Activated CD4-positive, alpha-beta T cell treated with anti-CD3 and anti-CD28 coated beads, Interleukin-2, amount 10 ng/mL, durations not matched to agents 24 days and 14 days (primary cell): ENCODE measurements at regions of chr11 and their contacts with region 1.

Region 1: GRCh38 chr11:95231127-95231880 is at the start of gene SESN3:
- DNase-seq: peak; percentile 100
- H3K4me3 Mint-ChIP-seq: no peak within 1 kb of the TSS
- H3K27ac Mint-ChIP-seq: peak within 1 kb of the TSS; percentile 92
- H3K4me1 Mint-ChIP-seq: peaks cover 28% of the 10 kb centered on the region
- H3K27me3 Mint-ChIP-seq: no peaks in the 10 kb centered on the region
- total RNA-seq, gene SESN3: 63.4 and 64.2 TPM in 2 replicates

Region 2: GRCh38 chr11:95084509-95084908 is 146.8 kb before region 1 on chr11:
- intact Hi-C with region 1: loop called (anchors 2 kb)
- DNase-seq: peak; percentile 71
- H3K4me3 Mint-ChIP-seq: peak overlapping the region; percentile 18
- H3K27ac Mint-ChIP-seq: peak overlapping the region; percentile 61
- H3K4me1 Mint-ChIP-seq: peaks cover 52% of the 10 kb centered on the region
- H3K27me3 Mint-ChIP-seq: no peaks in the 10 kb centered on the region

Region 3: GRCh38 chr11:95296621-95297025 is 65.3 kb after region 1 on chr11:
- intact Hi-C with region 1: loop called (anchors 5 kb)
- DNase-seq: no peak
- H3K4me3 Mint-ChIP-seq: no peak overlapping the region
- H3K27ac Mint-ChIP-seq: no peak overlapping the region
- H3K4me1 Mint-ChIP-seq: peaks cover 33% of the 10 kb centered on the region
- H3K27me3 Mint-ChIP-seq: peaks cover 4% of the 10 kb centered on the region

Region 4: DNA sequence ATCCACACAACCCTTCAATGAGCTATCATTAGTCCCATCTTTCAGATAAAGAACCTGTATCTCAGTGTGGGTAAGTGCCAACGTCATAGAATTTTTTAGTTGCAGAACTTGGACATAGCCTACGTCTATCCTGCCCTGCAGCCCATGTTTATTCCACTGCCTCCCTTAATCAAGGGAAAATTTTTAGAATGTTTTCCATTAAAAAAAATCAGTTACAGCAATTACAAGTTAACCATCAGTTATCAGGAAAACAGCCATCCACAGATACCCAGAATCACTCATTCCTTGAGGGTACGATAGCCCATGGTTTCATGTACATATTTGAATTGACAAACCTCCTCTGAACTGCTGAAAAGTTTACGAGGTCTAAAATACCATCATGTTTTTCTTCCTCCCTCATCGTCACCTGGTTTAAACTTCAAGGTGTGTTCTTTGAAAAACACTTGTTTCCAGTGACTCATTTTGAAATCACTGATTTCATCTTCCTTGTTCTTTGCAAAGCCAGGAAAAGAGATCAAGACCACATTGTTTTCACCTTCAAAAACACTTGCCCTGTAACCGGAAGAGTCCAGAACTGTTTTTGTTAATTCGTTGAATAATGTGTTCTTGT is 457.4 kb after region 1 on chr11:
- intact Hi-C with region 1: loop called (anchors 2 kb)
- DNase-seq: peak; percentile 83
- H3K4me3 Mint-ChIP-seq: no peak overlapping the region
- H3K27ac Mint-ChIP-seq: no peak overlapping the region
- H3K4me1 Mint-ChIP-seq: peaks cover 27% of the 10 kb centered on the region
- H3K27me3 Mint-ChIP-seq: no peaks in the 10 kb centered on the region

Region 5: GRCh38 chr11:95705485-95706124 is 474.3 kb after region 1 on chr11:
- intact Hi-C with region 1: loop called (anchors 1 kb)
- DNase-seq: peak; percentile 96
- H3K4me3 Mint-ChIP-seq: no peak overlapping the region
- H3K27ac Mint-ChIP-seq: no peak overlapping the region
- H3K4me1 Mint-ChIP-seq: peaks cover 17% of the 10 kb centered on the region
- H3K27me3 Mint-ChIP-seq: no peaks in the 10 kb centered on the region

Region 6: DNA sequence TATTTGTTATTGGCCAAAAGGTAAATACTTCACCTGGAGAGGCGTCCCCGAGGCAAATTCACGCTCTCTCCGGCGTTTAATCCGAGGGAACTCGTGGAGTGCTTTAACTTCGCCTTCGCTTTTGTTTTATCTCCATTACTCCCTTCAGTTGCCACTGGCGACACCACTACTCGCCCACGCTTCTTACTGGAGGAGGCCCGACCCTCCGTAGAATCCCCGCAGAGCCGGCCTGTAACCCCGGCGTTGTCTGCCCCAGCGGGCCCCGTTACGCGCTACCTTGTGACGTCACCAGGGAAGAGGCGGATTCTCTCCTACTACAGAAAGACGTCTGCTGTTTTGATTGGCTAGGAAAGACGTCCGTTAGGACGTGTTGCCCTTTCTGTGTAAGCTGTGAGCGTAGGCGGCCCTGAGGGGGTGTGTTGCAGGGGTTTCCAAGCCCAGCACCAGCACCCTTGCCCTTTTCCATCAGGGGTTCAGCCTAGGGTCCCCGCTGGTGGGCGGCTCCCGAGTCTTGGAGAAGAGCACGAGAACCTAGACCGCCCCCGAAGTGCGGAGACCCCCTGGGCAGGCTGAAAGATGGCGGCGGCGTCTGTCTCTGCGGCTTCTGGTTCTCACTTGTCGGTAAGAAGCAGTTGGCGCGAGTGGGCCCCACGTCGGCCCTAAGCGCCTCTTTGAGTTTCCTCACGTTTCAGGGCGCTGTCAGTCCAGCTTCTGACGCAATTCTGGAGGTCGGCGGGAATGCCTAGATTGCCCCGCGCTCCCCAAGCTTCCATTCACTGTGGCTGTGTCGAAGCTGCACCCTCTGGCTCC is 559.0 kb after region 1 on chr11 and contains the start of gene CEP57:
- intact Hi-C with region 1: loop called (anchors 1 kb)
- DNase-seq: peak; percentile 98
- H3K4me3 Mint-ChIP-seq: peak within 1 kb of the TSS; percentile 98
- H3K27ac Mint-ChIP-seq: peak within 1 kb of the TSS; percentile 100
- H3K4me1 Mint-ChIP-seq: peaks cover 45% of the 10 kb centered on the region
- H3K27me3 Mint-ChIP-seq: no peaks in the 10 kb centered on the region
- total RNA-seq, gene CEP57: 75.7 and 87.6 TPM in 2 replicates